Activated naive CD4-positive, alpha-beta T cell treated with anti-CD3 and anti-CD28 coated beads for 36 hours (primary cell): ENCODE measurements at regions of chr4 and their contacts with region 1.

Region 1: GRCh38 chr4:82437285-82438005 is 7.1 kb downstream of the ENOPH1 start:
- DNase-seq: no peak
- H3K4me3 Mint-ChIP-seq: no peak overlapping the region
- H3K27ac Mint-ChIP-seq: peak overlapping the region; percentile 57
- H3K4me1 Mint-ChIP-seq: peaks cover 90% of the 10 kb centered on the region
- H3K27me3 Mint-ChIP-seq: no peaks in the 10 kb centered on the region

Region 2: DNA sequence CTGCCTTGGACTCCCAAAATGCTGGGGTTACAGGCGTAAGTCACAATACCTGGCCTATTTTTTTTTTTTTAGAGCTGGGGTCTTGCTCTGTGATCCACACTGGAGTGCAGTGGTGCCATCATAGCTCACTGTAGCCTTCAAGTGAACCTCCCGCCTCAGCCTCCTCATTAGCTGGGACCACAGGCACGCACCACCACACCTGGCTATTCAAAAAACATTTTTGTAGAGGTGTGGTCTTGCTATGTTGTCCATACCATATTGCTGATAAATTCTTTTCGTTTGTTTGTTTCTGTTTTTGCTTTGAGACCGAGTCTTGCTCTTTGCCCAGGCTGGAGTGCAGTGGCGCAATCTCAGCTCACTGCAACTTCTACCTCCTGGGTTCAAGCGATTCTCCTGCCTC is 14.6 kb after region 1 on chr4:
- CTCF ChIA-PET with region 1: interaction called, 5 read pairs
- intact Hi-C with region 1: loop called (anchors 2 kb)
- DNase-seq: no peak
- H3K4me3 Mint-ChIP-seq: no peak overlapping the region
- H3K27ac Mint-ChIP-seq: peak overlapping the region; percentile 36
- H3K4me1 Mint-ChIP-seq: peaks cover 15% of the 10 kb centered on the region
- H3K27me3 Mint-ChIP-seq: no peaks in the 10 kb centered on the region